ENCODE measurements at regions of chr10 and their contacts with region 1.

Region 1: DNA sequence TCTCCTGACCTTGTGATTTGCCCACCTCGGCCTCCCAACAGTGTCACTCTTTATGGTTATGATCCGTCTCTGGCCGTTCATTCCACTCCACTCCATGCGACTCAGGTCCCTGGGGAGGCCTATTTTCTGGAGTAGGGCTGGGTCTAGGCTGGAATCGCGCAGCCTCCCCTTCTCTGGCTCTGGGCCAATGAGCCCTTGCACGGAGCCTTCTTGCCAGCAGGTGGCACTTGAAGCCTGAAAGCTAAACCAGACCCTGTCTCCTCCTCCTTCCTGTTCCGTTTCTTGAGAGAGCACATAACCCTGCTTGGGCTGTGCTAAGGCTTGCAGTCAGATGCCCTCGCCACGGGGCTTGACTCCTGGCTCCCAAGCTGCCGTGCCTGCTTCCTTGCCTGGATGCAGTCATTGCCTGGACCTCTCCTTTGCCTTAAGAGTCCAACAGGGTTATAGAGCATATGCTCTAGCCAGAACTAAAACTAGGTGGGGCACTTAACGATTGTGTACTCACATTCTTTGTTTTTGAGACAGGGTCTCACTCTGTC is 9.6 kb upstream of the DNAJB12 start:
- DNase-seq: peak; percentile 74 to 90 (median 81)
- H3K4me3 ChIP-seq: no peak overlapping the region
- H3K4me3 Mint-ChIP-seq: peak overlapping the region in 6 of 7 donors; percentile 2 to 80 (median 53)
- H3K27ac ChIP-seq: no peak overlapping the region
- H3K27ac Mint-ChIP-seq: peak overlapping the region in 6 of 8 donors; percentile 0 to 71 (median 42)
- H3K4me1 ChIP-seq: peaks cover 10% of the 10 kb centered on the region
- H3K4me1 Mint-ChIP-seq: peaks cover 24 to 42% (median 31%) of the 10 kb centered on the region in 3 donors
- H3K27me3 ChIP-seq: no peaks in the 10 kb centered on the region
- H3K27me3 Mint-ChIP-seq: no peaks in the 10 kb centered on the region

Region 2: GRCh38 chr10:72375585-72375984 is 11.3 kb after region 1 on chr10:
- CTCF ChIA-PET with region 1: interaction called, 18 read pairs
- POLR2A ChIA-PET with region 1: no interaction called
- DNase-seq: no peak
- H3K4me3 ChIP-seq: no peak overlapping the region
- H3K4me3 Mint-ChIP-seq: no peak overlapping the region
- H3K27ac ChIP-seq: no peak overlapping the region
- H3K27ac Mint-ChIP-seq: no peak overlapping the region
- H3K4me1 ChIP-seq: peaks cover 2% of the 10 kb centered on the region
- H3K4me1 Mint-ChIP-seq: peaks cover 4 to 12% (median 7%) of the 10 kb centered on the region in 3 donors
- H3K27me3 ChIP-seq: no peaks in the 10 kb centered on the region
- H3K27me3 Mint-ChIP-seq: peaks cover 0 to under 1% of the 10 kb centered on the region in 2 donors

Region 3: DNA sequence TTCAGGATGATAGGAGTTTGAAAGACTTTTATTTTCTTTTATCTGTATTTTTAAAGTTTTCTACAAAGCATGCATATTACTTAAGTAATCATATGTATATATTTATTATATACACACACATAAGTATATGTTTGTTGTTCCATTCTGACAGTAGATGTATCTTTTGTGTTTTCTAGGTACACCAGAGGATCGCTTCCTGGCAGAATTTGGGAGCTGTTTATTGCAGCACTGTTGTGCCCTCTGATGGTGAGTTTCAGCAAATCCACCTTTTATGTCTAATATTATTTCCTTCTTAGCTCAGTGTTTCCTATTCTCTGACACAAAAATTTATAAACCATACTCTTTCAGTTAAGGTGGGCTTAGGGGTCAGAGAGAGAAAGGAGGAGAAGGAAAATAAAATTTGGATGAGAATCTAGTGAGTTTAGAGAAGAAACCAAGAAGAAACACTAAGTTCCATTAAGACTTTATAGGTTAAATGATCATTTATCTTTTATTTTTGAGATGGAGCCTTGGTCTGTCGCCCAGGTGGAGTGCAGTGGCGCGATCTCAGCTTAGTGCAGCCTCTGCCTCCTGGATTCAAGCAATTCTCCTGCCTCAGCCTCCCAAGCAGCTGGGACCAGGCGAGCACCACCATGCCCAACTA is 470.0 kb after region 1 on chr10:
- CTCF ChIA-PET with region 1: interaction called, 32 read pairs
- POLR2A ChIA-PET with region 1: interaction called, 3 read pairs
- DNase-seq: peak; percentile 8 to 55 (median 37)
- H3K4me3 ChIP-seq: no peak overlapping the region
- H3K4me3 Mint-ChIP-seq: no peak overlapping the region
- H3K27ac ChIP-seq: no peak overlapping the region
- H3K27ac Mint-ChIP-seq: no peak overlapping the region
- H3K4me1 ChIP-seq: no peaks in the 10 kb centered on the region
- H3K4me1 Mint-ChIP-seq: no peaks in the 10 kb centered on the region
- H3K27me3 ChIP-seq: no peaks in the 10 kb centered on the region
- H3K27me3 Mint-ChIP-seq: no peaks in the 10 kb centered on the region

Region 4: GRCh38 chr10:72875250-72876055 is 511.1 kb after region 1 on chr10:
- CTCF ChIA-PET with region 1: interaction called, 14 read pairs
- POLR2A ChIA-PET with region 1: no interaction called
- DNase-seq: peak in 2 of 5 donors; percentile 4 to 15
- H3K4me3 ChIP-seq: no peak overlapping the region
- H3K4me3 Mint-ChIP-seq: no peak overlapping the region
- H3K27ac ChIP-seq: no peak overlapping the region
- H3K27ac Mint-ChIP-seq: no peak overlapping the region
- H3K4me1 ChIP-seq: no peaks in the 10 kb centered on the region
- H3K4me1 Mint-ChIP-seq: no peaks in the 10 kb centered on the region
- H3K27me3 ChIP-seq: no peaks in the 10 kb centered on the region
- H3K27me3 Mint-ChIP-seq: no peaks in the 10 kb centered on the region